T-cell (primary cell): ENCODE measurements at regions of chr9 and their contacts with region 1.

Region 1: DNA sequence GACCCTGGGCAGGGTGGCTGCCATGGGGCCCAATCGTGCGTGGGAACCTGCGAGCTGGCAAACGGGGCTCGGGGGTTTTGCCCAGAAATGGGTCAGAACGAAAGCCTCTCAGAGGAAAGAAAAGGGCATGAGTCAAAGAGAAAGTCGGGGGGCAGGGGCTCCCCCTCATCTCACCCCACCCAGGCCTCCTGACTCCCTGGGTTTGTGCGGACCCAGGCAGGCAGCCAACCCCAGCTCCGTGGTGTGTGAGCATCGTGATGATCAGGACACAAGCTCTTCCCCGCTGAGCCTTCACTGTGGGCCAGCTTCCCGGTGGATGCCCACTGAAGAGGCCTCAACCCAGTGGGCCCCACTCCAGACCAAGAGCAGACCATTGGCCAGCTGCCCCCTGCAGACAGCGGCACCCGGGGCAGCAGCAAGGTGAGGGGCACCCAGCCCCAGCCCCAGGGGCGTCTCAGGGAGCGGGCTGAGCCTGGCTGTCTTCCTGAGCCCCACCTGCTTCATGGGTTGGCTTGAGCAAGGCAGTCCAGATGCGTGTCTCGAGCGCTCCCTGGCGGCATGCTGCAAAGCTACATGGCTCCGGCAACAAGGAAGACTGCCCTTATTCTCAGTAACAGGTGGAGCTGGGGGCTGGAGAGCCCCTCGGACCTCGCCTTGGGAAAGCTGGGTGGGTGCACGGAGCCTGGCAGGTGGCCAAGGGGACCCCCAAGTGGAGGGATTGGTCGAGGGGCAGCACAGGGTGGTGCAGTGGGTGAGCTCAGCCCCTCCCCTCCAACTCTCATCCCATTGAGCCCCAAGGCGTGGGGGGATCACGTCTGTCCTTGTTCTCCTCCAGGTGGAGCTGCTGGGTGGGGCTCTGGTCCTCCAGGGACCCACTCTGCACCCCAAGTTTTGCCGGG is 3.2 kb upstream of the FUT7 start:
- DNase-seq: peak; percentile 68 to 95 (median 83)
- ATAC-seq: peak; percentile 80 to 88 (median 87)
- H3K4me3 ChIP-seq: peak overlapping the region; percentile 1 to 29
- H3K4me3 Mint-ChIP-seq: peak overlapping the region; percentile 59 to 82 (median 75)
- H3K27ac ChIP-seq: peak overlapping the region; percentile 67
- H3K27ac Mint-ChIP-seq: peak overlapping the region; percentile 88 to 93
- H3K4me1 ChIP-seq: peaks cover 2 to 56% of the 10 kb centered on the region in 2 experiments
- H3K4me1 Mint-ChIP-seq: peaks cover 31 to 40% (median 36%) of the 10 kb centered on the region in 3 donors
- H3K27me3 ChIP-seq: peaks cover 0 to 22% of the 10 kb centered on the region in 2 experiments
- H3K27me3 Mint-ChIP-seq: peaks cover 0 to 2% of the 10 kb centered on the region in 2 donors

Region 2: DNA sequence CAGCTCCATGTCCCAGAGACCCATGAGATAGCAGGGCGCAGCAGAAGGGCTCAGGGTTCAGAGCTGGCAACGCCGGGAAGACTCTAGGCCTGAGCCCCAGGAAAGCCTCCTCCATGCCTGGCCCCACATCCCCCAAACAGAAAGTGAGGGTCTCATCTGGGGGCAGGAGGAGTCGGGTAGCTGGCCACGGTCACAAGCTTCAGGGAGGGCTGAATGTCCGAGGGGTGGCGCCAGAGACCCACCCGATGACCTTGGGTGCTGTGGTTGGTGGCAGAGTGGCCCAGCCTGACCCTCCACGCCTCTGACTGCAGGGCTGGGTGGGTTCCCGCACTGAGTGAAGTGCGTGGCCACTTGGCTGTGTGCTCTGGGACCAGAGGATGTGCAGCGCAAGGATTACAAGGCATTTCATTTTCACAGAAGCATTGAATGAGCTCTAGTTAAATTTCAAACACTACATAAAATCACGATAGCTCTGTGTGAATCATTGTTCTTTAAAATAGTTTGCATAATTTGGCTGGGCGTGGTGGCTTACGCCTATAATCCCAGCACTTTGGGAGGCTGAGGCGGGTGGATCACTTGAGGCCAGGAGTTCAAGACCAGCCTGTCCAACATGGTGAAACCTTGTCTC is 87.0 kb before region 1 on chr9:
- CTCF ChIA-PET with region 1: interaction called, 4 to 19 read pairs
- POLR2A ChIA-PET with region 1: no interaction called
- DNase-seq: peak in 1 of 35 experiments; percentile 40
- ATAC-seq: no peak
- H3K4me3 ChIP-seq: no peak overlapping the region
- H3K4me3 Mint-ChIP-seq: peak overlapping the region; percentile 17 to 81 (median 59)
- H3K27ac ChIP-seq: no peak overlapping the region
- H3K27ac Mint-ChIP-seq: peak overlapping the region; percentile 46 to 55
- H3K4me1 ChIP-seq: peaks cover 7 to 63% of the 10 kb centered on the region in 2 experiments
- H3K4me1 Mint-ChIP-seq: peaks cover 9 to 25% (median 12%) of the 10 kb centered on the region in 3 donors
- H3K27me3 ChIP-seq: no peaks in the 10 kb centered on the region
- H3K27me3 Mint-ChIP-seq: no peaks in the 10 kb centered on the region

Region 3: GRCh38 chr9:138007911-138008841 is 973.1 kb after region 1 on chr9:
- CTCF ChIA-PET with region 1: no interaction called
- POLR2A ChIA-PET with region 1: no interaction called
- DNase-seq: peak in 1 of 35 experiments; percentile 21
- ATAC-seq: no peak
- H3K4me3 ChIP-seq: no peak overlapping the region
- H3K4me3 Mint-ChIP-seq: no peak overlapping the region
- H3K27ac ChIP-seq: no peak overlapping the region
- H3K27ac Mint-ChIP-seq: no peak overlapping the region
- H3K4me1 ChIP-seq: no peaks in the 10 kb centered on the region
- H3K4me1 Mint-ChIP-seq: no peaks in the 10 kb centered on the region
- H3K27me3 ChIP-seq: peaks cover 0 to 5% of the 10 kb centered on the region in 2 experiments
- H3K27me3 Mint-ChIP-seq: peaks cover 4% of the 10 kb centered on the region in 2 donors